ENCODE measurements at regions of chr21 and their contacts with region 1.

Region 1: GRCh38 chr21:45152265-45152746 is 77.9 kb downstream of the ADARB1 start:
- DNase-seq: peak; percentile 48 to 69 (median 60)
- H3K4me3 ChIP-seq: no peak overlapping the region
- H3K4me3 Mint-ChIP-seq: peak overlapping the region in 7 of 8 donors; percentile 28 to 81 (median 74)
- H3K27ac ChIP-seq: peak overlapping the region; percentile 20
- H3K27ac Mint-ChIP-seq: peak overlapping the region; percentile 71 to 92 (median 85)
- H3K4me1 ChIP-seq: peaks cover 38% of the 10 kb centered on the region
- H3K4me1 Mint-ChIP-seq: peaks cover 32 to 60% (median 47%) of the 10 kb centered on the region in 4 donors
- H3K27me3 ChIP-seq: no peaks in the 10 kb centered on the region
- H3K27me3 Mint-ChIP-seq: no peaks in the 10 kb centered on the region

Region 2: GRCh38 chr21:44873356-44874239 is 278.7 kb before region 1 on chr21 and contains the start of gene PTTG1IP:
- CTCF ChIA-PET with region 1: no interaction called
- POLR2A ChIA-PET with region 1: no interaction called
- intact Hi-C with region 1: no loop called
- DNase-seq: peak; percentile 98 to 99 (median 99)
- H3K4me3 ChIP-seq: peak within 1 kb of the TSS; percentile 67 to 70
- H3K4me3 Mint-ChIP-seq: peak within 1 kb of the TSS; percentile 92 to 97 (median 95)
- H3K27ac ChIP-seq: peak within 1 kb of the TSS; percentile 76
- H3K27ac Mint-ChIP-seq: peak within 1 kb of the TSS; percentile 92 to 98 (median 97)
- H3K4me1 ChIP-seq: peaks cover 55% of the 10 kb centered on the region
- H3K4me1 Mint-ChIP-seq: peaks cover 37 to 59% (median 48%) of the 10 kb centered on the region in 4 donors
- H3K27me3 ChIP-seq: no peaks in the 10 kb centered on the region
- H3K27me3 Mint-ChIP-seq: no peaks in the 10 kb centered on the region
- total RNA-seq, gene PTTG1IP: 98.7 to 110 TPM

Region 3: GRCh38 chr21:45287438-45288391 is 135.4 kb after region 1 on chr21 and contains the start of gene POFUT2:
- CTCF ChIA-PET with region 1: interaction called, 3 read pairs
- POLR2A ChIA-PET with region 1: no interaction called
- intact Hi-C with region 1: loop called (anchors 5 kb)
- DNase-seq: peak; percentile 95 to 100 (median 98)
- H3K4me3 ChIP-seq: peak within 1 kb of the TSS in 1 of 2 donors; percentile 63
- H3K4me3 Mint-ChIP-seq: peak within 1 kb of the TSS; percentile 78 to 96 (median 84)
- H3K27ac ChIP-seq: peak within 1 kb of the TSS; percentile 78
- H3K27ac Mint-ChIP-seq: peak within 1 kb of the TSS; percentile 87 to 97 (median 93)
- H3K4me1 ChIP-seq: peaks cover 14% of the 10 kb centered on the region
- H3K4me1 Mint-ChIP-seq: peaks cover 12 to 46% (median 24%) of the 10 kb centered on the region in 4 donors
- H3K27me3 ChIP-seq: no peaks in the 10 kb centered on the region
- H3K27me3 Mint-ChIP-seq: no peaks in the 10 kb centered on the region
- total RNA-seq, gene POFUT2: 40.1 to 40.8 TPM

Region 4: DNA sequence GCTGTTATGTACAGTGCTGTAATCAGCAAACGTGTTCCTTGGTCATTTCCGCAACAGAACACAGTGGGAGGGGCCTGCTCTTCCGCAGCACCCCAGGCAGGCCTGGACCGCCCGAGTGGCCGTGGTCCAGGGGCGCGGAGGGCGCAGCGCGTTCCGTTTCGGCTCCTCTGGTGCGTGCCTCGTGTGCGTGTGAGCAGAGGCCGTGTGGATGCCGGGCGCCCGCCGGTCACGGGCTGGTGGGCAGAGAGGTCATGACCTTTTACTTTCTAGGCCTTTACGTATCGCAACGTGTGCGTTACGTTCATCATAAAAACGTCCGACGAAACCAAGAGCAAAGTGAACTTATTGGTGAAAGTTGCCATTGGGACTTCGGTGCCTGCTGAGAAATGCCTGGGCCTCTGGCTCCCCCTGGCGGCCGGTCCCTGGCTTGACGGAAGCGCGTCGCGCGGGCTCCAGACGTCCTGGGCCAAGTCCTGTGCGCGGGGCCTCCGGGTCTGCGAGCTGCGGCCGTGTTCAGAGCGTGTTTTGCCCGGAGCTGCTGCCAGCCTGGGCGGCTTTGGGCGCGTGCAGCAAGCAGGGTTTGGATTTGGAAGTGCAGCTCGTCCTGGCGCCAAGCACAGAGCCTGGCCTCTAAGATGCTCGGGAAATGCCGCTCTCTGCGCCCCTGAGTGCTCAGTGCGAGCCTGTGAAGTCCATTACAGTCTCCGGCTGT is 287.0 kb after region 1 on chr21:
- CTCF ChIA-PET with region 1: no interaction called
- POLR2A ChIA-PET with region 1: no interaction called
- intact Hi-C with region 1: loop called (anchors 1 kb)
- DNase-seq: peak; percentile 76 to 84 (median 81)
- H3K4me3 ChIP-seq: peak overlapping the region in 1 of 2 donors; percentile 44
- H3K4me3 Mint-ChIP-seq: peak overlapping the region; percentile 57 to 78 (median 74)
- H3K27ac ChIP-seq: peak overlapping the region; percentile 43
- H3K27ac Mint-ChIP-seq: peak overlapping the region in 6 of 7 donors; percentile 41 to 90 (median 78)
- H3K4me1 ChIP-seq: peaks cover 10% of the 10 kb centered on the region
- H3K4me1 Mint-ChIP-seq: peaks cover 2 to 12% (median 6%) of the 10 kb centered on the region in 4 donors
- H3K27me3 ChIP-seq: no peaks in the 10 kb centered on the region
- H3K27me3 Mint-ChIP-seq: peaks cover 1 to 7% of the 10 kb centered on the region in 2 donors